Tibial artery (tissue), 4 donors: ENCODE measurements at regions of chr13 and their contacts with region 1.

Region 1: GRCh38 chr13:56687131-56687530 is 453.6 kb upstream of the PRR20A start:
- DNase-seq: no peak
- H3K4me3 ChIP-seq: no peak overlapping the region
- H3K27ac ChIP-seq: no peak overlapping the region
- H3K4me1 ChIP-seq: no peaks in the 10 kb centered on the region
- H3K27me3 ChIP-seq: no peaks in the 10 kb centered on the region
- CTCF ChIP-seq: no peak

Region 2: DNA sequence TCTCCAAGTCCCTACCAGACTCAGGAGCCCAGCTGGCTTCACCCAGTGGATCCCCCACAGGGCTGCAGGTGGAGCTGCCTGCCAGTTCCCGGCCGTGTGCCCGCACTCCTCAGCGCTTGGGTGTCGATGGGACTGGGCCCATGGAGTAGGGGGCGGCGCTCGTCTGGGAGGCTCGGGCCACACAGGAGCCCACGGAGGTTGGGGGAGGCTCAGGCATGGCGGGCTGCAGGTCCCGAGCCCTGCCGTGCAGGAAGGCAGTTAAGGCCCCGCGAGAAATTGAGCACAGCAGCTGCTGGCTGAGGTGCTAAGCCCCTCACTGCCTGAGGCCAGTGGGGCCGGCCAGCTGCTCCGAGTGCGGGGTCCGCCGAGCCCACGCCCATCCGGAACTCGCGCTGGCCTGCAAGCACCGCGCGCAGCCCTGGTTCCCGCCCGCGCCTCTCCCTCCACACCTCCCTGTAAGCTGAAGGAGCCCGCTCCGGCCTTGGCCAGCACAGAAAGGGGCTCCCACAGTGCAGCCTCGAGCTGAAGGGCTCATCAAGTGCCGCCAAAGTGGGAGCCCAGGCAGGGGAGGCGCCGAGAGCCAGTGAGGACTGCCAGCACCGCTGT is 1887.4 kb before region 1 on chr13:
- intact Hi-C with region 1: no loop called
- DNase-seq: no peak
- H3K4me3 ChIP-seq: no peak overlapping the region
- H3K27ac ChIP-seq: no peak overlapping the region
- H3K4me1 ChIP-seq: no peaks in the 10 kb centered on the region
- H3K27me3 ChIP-seq: no peaks in the 10 kb centered on the region
- CTCF ChIP-seq: no peak

Region 3: DNA sequence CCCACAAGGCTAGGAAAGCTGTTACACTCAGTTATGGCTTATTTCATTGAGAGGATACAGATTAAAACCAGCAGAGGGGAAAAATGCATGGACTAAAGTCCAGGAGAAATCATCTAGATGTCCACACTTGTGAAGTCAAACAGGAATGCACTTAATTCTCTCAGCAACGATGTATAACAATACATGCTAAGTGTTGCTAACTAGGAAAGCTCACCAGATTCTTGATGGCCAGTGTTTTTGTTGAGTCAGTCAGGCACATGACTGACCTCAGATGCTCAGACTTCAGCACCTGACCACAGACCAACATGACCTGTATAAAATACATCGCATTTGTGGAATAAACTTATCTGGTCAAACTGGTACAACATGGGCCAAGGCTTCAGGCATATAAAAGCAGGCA is 16.6 kb before region 1 on chr13:
- intact Hi-C with region 1: loop called (anchors 2 kb)
- DNase-seq: no peak
- H3K4me3 ChIP-seq: no peak overlapping the region
- H3K27ac ChIP-seq: no peak overlapping the region
- H3K4me1 ChIP-seq: no peaks in the 10 kb centered on the region
- H3K27me3 ChIP-seq: no peaks in the 10 kb centered on the region
- CTCF ChIP-seq: no peak

Region 4: GRCh38 chr13:57036290-57036689 is 349.2 kb after region 1 on chr13:
- intact Hi-C with region 1: no loop called
- DNase-seq: no peak
- H3K4me3 ChIP-seq: no peak overlapping the region
- H3K27ac ChIP-seq: no peak overlapping the region
- H3K4me1 ChIP-seq: no peaks in the 10 kb centered on the region
- H3K27me3 ChIP-seq: no peaks in the 10 kb centered on the region
- CTCF ChIP-seq: no peak